Right ventricle myocardium superior (tissue), 1 donor: ENCODE measurements at regions of chr1 and their contacts with region 1.

Region 1: GRCh38 chr1:116909510-116910378 is at the start of gene PTGFRN:
- DNase-seq: peak; percentile 86
- ATAC-seq: peak; percentile 85
- total RNA-seq, gene PTGFRN: 81.5 TPM

Region 2: DNA sequence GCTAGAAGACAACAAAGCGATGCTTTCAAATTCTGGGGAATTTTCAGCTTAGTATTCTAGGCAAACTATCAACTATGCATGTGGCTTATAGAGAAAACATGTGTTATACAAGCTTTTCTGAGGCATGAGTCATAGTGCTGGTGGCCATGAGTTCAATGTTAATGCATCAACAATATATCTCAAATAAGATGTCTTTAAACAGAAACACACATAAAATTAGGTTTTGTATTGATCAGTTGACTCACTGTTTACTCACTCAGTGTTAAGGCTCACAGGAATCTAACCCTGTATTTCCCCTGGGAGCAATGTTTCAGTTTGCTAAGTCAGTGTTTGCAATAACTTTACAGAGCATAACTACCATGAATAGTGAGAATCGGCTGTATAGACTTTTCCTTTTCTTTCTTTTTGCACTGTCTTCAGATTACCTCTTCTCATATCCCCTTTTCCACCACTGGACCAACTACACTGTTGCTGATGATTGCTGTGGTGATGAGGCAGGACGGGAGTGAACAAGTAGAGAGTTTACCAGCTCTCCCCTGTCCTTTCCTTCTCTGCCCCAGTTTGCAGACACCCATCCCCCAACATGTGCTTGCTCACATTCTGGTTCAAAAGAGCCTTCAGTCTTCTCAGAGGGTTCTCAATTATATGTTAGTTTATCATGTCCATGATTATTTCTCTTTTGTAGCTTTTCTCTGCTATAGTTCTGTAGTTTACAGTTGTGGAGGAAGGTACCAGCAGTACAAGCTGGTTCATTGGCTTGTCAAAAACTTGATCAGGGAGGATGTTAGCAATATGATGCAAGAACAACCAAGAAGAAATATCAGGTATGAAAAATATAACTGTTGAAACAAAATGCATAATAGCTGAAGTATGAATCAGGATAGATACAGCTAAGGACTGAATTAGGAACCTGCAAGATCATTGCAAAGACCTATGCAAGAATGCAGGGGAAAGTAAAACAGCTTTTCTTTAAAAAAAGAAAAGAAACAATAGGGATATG is 131.6 kb before region 1 on chr1:
- intact Hi-C with region 1: no loop called
- DNase-seq: no peak
- ATAC-seq: no peak

Region 3: DNA sequence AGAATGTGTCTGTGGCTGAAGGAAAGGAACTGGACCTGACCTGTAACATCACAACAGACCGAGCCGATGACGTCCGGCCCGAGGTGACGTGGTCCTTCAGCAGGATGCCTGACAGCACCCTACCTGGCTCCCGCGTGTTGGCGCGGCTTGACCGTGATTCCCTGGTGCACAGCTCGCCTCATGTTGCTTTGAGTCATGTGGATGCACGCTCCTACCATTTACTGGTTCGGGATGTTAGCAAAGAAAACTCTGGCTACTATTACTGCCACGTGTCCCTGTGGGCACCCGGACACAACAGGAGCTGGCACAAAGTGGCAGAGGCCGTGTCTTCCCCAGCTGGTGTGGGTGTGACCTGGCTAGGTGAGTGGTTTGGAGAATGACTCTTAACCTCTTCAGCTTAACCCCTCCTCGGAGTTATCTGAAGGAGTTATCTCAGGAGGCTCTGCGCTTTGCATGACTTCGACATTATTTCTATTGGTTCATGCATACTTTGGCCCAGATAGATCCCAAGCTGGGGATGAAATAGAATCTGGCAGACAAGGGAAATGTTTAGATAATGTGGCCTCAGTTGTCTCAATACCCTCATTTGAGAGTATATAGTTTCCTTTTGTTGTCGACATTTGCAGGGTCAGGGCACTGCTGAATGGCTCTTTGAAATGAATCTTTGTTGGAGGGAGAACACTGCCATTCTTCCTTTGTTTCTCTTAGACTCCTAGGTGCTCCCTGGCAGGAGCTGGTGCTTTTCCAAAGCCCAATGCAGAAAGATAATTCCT is 39.7 kb after region 1 on chr1:
- intact Hi-C with region 1: loop called (anchors 5 kb)
- DNase-seq: no peak
- ATAC-seq: no peak